ENCODE measurements at regions of chr5 and their contacts with region 1.

Region 1: GRCh38 chr5:112146323-112147226 is 272.5 kb downstream of the EPB41L4A start:
- DNase-seq: peak; percentile 20
- H3K4me3 Mint-ChIP-seq: no peak overlapping the region
- H3K27ac Mint-ChIP-seq: no peak overlapping the region
- H3K4me1 Mint-ChIP-seq: no peaks in the 10 kb centered on the region
- H3K27me3 Mint-ChIP-seq: peaks cover 12% of the 10 kb centered on the region

Region 2: GRCh38 chr5:111530298-111530740 is 616.3 kb before region 1 on chr5:
- intact Hi-C with region 1: loop called (anchors 1 kb)
- DNase-seq: peak; percentile 80
- H3K4me3 Mint-ChIP-seq: peak overlapping the region; percentile 46
- H3K27ac Mint-ChIP-seq: peak overlapping the region; percentile 87
- H3K4me1 Mint-ChIP-seq: peaks cover 35% of the 10 kb centered on the region
- H3K27me3 Mint-ChIP-seq: no peaks in the 10 kb centered on the region

Region 3: GRCh38 chr5:111680737-111681413 is 465.7 kb before region 1 on chr5:
- intact Hi-C with region 1: loop called (anchors 10 kb)
- DNase-seq: no peak
- H3K4me3 Mint-ChIP-seq: no peak overlapping the region
- H3K27ac Mint-ChIP-seq: no peak overlapping the region
- H3K4me1 Mint-ChIP-seq: no peaks in the 10 kb centered on the region
- H3K27me3 Mint-ChIP-seq: peaks cover 16% of the 10 kb centered on the region

Region 4: GRCh38 chr5:112397690-112398089 is 251.1 kb after region 1 on chr5:
- intact Hi-C with region 1: no loop called
- DNase-seq: no peak
- H3K4me3 Mint-ChIP-seq: no peak overlapping the region
- H3K27ac Mint-ChIP-seq: no peak overlapping the region
- H3K4me1 Mint-ChIP-seq: no peaks in the 10 kb centered on the region
- H3K27me3 Mint-ChIP-seq: peaks cover 8% of the 10 kb centered on the region

Measured in activated T-helper 2 cell treated with anti-CD3 and anti-CD28 coated beads, Interferon-gamma antibody, Interleukin-2, Interleukin-4, amounts not matched to agents 10 μg/mL and 5 μg/mL and 100 μg/mL, durations not matched to agents 14 hours and 24 hours and 36 hours (primary cell).